Activated T-helper 1 cell treated with anti-CD3 and anti-CD28 coated beads, Interleukin-12 subunit alpha, Interleukin-12 subunit beta, Interleukin-2, Interleukin-4 antibody, amounts not matched to agents 30 ng/mL and 10 ng/mL and 1 ng/mL, durations not matched to agents 14 hours and 24 hours and 36 hours (primary cell): ENCODE measurements at regions of chr16 and their contacts with region 1.

Region 1: DNA sequence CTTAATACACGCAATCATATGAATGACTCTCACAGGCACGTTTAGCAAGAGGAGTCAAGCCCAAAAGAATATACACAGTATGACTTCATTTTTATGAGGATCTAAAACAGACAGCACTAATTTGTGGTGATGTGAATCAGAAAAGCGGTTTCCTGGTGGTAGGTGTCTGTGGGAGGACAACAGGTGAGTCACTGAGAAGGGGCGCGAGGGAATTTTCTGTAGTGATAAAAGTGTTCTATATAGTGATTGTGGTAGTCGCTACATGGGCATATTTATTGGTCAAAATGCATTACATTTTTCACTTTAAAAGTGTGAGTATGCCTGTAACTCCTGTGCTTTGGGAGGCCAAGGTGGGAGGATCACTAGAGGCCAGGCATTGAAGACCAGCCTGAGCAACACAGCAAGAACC is 7.6 kb upstream of the TNRC6A start:
- DNase-seq: no peak
- H3K4me3 Mint-ChIP-seq: no peak overlapping the region
- H3K27ac Mint-ChIP-seq: peak overlapping the region; percentile 7
- H3K4me1 Mint-ChIP-seq: peaks cover 14% of the 10 kb centered on the region
- H3K27me3 Mint-ChIP-seq: peaks cover 5% of the 10 kb centered on the region

Region 2: DNA sequence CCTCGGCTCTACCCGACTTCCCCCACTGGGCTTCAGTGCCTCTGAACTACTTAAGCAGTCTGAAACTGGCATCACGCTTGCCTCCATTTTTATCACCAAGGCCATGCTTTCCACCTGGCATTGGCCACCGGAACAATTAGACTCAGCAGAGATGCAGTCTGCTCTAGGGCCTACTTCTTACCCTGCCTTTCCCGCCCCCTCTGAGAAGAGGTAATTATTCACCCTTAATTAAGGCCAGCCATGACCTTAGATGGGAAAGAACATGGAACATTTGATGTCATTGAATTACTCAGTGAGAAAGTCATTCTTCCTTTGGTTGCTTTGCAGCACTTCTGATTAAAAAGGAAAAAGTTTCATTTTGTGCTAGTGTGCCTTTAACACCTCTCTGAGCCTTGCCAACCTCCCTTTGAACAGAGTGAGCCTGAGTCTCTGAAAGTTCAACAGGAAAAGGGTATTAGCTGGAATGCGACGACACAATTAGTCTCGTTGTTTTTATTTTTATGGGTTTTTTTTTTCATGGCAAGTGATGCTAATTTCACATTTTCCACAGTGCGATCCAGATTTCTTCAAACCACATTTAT is 53.3 kb before region 1 on chr16:
- intact Hi-C with region 1: loop called (anchors 2 kb)
- DNase-seq: no peak
- H3K4me3 Mint-ChIP-seq: peak overlapping the region; percentile 66
- H3K27ac Mint-ChIP-seq: peak overlapping the region; percentile 95
- H3K4me1 Mint-ChIP-seq: peaks cover 27% of the 10 kb centered on the region
- H3K27me3 Mint-ChIP-seq: peaks cover 2% of the 10 kb centered on the region